Aorta (tissue), 5 donors: ENCODE measurements at regions of chr2 and their contacts with region 1.

Region 1: DNA sequence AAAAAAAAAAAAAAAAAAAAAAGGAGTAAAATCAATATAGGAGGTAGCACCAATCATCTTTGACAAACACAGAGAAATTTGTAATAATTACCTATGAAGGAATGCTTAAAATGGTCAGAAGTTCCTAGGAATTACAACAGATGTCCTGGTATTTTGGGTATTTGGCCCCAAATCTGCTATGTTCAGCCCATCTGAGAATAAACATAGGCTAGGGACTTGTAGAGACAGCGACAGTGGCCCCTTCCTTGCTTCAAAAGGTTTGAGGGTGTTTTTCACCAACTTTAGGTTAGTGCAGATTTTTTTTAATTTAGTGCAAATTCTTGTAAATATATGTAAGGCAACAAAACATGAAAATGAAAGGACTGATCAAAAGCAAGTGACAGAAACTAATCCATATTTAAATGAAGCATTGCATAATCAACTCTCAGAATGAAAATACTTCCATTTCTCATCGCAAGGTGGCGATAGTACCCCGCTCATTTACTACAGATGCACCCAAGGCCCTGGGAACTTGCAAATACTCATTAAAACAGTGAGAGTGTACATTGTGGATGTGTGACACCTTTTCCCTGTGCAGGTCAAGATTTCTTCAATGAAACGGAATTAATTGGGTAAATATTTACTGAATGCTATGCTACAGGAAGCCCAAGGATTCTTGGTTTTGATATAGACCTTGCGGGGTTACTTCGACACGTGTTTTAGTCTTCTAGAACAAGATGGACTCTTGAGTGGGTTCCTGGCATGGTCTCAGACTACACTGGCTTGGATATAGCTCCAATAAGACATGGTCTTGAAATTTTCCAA is 44.6 kb downstream of the FAM124B start:
- DNase-seq: no peak
- ATAC-seq: peak; percentile 72
- H3K4me3 ChIP-seq: no peak overlapping the region
- H3K27ac ChIP-seq: no peak overlapping the region
- H3K4me1 ChIP-seq: no peaks in the 10 kb centered on the region
- H3K27me3 ChIP-seq: no peaks in the 10 kb centered on the region

Region 2: GRCh38 chr2:223772363-223772762 is 584.9 kb before region 1 on chr2:
- intact Hi-C with region 1: no loop called
- DNase-seq: no peak
- ATAC-seq: no peak
- H3K4me3 ChIP-seq: no peak overlapping the region
- H3K27ac ChIP-seq: no peak overlapping the region
- H3K4me1 ChIP-seq: no peaks in the 10 kb centered on the region
- H3K27me3 ChIP-seq: no peaks in the 10 kb centered on the region

Region 3: DNA sequence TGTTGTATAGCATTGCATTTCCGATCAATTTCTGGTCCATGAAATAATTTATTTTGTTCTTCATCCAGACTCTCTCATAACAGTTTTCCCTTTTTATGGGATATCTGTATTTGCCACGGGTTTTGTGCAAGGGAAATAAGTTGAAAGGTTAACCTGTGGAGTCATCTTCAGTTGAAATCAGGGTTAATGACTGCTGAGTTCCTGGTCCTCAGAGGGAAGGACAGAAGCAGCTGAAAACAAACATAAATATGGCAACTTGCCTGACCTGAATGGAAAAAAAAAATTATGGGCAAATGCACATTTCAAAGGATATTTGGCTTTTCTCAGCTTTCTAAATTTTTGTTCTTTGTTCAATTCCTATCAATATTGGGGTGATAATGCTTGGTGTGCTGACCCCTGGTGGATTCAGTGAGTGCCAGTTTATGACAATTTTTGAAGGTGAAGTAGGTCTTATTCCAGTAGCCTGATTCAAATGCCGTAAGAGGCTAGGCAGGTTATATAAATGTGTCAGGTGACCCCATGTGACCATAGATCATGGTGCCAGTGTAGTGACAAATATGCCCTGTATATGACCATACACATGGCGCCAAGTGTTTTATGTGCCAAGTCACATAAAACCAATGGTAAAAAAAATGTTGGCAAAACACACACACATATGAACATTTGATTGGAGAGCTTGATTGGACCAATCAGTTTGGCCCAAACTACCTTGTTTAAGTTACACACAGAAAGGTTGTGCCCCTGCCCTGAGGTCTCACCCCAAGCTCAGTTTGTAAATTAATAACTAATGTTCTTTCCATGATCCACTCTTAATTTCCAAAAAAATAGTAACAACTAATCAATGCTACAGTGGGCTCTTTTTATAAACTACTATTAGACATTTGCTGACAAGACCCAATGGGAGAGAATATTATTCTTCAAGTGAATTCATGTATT is 92.2 kb after region 1 on chr2:
- intact Hi-C with region 1: loop called in 1 of 2 experiments (anchors 10 kb)
- DNase-seq: no peak
- ATAC-seq: no peak
- H3K4me3 ChIP-seq: no peak overlapping the region
- H3K27ac ChIP-seq: no peak overlapping the region
- H3K4me1 ChIP-seq: no peaks in the 10 kb centered on the region
- H3K27me3 ChIP-seq: no peaks in the 10 kb centered on the region

Region 4: DNA sequence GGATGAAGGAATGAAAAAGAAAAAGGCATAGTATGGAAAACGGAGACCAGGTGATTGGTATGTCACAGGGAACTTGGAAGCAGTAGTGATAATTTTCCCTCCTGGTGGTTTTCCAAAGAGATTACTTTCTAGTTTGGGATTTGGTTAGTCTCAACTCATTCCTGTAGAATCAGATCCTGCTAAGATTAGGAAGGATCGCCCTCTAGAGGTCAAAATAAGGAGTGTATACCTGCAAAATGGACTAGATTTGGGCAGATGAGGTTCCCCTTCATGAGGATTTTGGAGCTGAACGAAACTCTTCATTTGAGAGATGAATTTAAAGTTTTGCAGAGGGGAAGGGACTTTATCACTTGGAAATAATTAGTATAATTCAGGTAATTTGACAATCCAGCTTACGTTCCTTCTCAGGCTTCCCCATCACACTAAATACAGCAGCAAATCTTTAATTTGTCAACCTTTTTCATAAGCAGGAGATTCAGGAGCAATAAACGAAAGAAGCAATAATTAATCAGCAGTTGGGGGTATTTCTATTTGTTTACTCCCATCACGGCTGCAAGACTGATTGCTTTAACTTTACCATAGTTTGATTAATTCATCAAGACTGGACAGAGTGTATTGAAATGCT is 293.6 kb after region 1 on chr2:
- intact Hi-C with region 1: loop called (anchors 1 to 2 kb)
- DNase-seq: no peak
- ATAC-seq: no peak
- H3K4me3 ChIP-seq: no peak overlapping the region
- H3K27ac ChIP-seq: no peak overlapping the region
- H3K4me1 ChIP-seq: no peaks in the 10 kb centered on the region
- H3K27me3 ChIP-seq: no peaks in the 10 kb centered on the region

Region 5: GRCh38 chr2:224778474-224778877 is 421.2 kb after region 1 on chr2:
- intact Hi-C with region 1: loop called in 1 of 2 experiments (anchors 5 kb)
- DNase-seq: no peak
- ATAC-seq: no peak
- H3K4me3 ChIP-seq: no peak overlapping the region
- H3K27ac ChIP-seq: no peak overlapping the region
- H3K4me1 ChIP-seq: no peaks in the 10 kb centered on the region
- H3K27me3 ChIP-seq: no peaks in the 10 kb centered on the region